Activated CD4-positive, alpha-beta T cell treated with anti-CD3 and anti-CD28 coated beads, Interleukin-2, amount 10 ng/mL, durations not matched to agents 24 days and 14 days (primary cell): ENCODE measurements at regions of chr12 and their contacts with region 1.

Region 1: DNA sequence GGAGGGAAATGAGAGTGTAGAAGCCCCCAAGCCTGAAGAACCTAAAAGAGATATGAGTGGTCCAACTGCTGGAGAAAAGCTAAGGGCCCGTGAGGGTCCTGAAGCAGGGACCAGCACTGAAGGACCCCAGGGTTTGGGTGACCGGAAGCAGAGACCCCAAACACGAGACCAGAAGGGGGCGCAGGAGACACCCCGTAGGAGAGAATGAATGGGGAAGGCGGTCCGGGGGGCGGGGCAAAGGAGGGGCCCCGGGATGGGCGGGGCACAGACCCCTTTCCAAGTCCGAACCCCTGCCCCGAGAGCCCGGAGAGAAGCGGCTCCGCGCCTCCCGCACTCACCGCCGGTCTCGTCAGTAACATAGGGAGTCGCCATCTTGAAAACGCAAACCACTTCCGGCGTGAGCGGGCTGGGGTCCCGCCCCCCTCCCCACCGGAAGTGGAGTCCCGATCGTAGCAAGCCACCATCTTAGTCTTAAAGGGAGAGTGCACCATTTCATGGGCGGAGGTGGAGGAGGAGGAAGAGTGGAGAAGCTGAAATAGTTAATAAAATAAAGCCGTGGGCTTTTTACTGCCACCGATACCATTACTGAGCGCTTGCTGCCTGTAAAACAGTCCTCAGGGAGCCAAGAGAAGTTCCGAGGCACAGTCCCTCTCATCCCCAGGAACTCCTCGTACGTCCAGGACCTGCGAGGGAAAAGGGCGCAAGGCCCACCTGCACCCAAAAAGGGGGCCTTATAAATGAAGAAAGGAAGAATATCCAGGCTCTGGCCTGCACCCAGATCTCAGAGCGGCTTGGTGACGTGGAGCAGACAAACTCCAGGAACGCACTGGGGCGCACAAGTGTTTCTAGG is 731 bp downstream of the PYM1 start:
- DNase-seq: peak; percentile 96
- H3K4me3 Mint-ChIP-seq: peak overlapping the region; percentile 99
- H3K27ac Mint-ChIP-seq: peak overlapping the region; percentile 98
- H3K4me1 Mint-ChIP-seq: peaks cover 40% of the 10 kb centered on the region
- H3K27me3 Mint-ChIP-seq: peaks cover 2% of the 10 kb centered on the region

Region 2: GRCh38 chr12:55728939-55729823 is 197.8 kb before region 1 on chr12 and contains the start of gene CD63:
- intact Hi-C with region 1: loop called (anchors 1 kb)
- DNase-seq: peak; percentile 89
- H3K4me3 Mint-ChIP-seq: peak within 1 kb of the TSS; percentile 92
- H3K27ac Mint-ChIP-seq: peak within 1 kb of the TSS; percentile 95
- H3K4me1 Mint-ChIP-seq: peaks cover 36% of the 10 kb centered on the region
- H3K27me3 Mint-ChIP-seq: no peaks in the 10 kb centered on the region
- total RNA-seq, gene CD63: 190 and 196 TPM in 2 replicates

Region 3: DNA sequence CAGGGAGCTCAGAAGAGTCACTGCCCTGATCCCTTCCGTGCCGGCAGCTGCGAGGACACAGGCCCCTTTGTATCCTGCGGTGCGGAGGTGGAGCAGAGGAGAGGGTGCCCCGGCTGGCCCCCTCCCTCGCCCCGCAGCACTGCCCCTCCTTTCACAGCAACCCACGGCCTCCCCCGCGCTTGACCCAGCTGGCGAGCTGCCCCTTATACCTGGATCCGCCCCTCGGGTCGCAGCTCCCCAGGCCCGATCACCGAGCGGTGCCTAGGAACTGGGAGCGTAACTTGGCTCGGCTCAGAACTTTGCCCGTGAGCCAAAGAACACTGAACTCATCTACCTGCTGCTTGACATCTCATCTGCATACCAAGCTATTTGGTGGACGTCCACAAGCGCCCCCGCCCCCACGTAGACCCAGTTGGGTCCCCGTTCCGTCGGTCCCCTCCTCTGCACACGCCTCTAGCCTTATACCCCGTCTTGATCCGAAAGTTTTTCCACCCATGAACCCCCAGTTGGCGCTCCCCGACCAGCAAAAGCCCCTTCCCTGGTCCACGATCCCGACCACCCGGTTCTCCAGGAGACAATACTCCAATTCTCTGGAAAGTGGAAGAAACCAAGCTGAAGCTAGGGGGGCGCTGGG is 96.9 kb before region 1 on chr12:
- intact Hi-C with region 1: loop called (anchors 1 kb)
- DNase-seq: peak; percentile 81
- H3K4me3 Mint-ChIP-seq: peak overlapping the region; percentile 98
- H3K27ac Mint-ChIP-seq: peak overlapping the region; percentile 93
- H3K4me1 Mint-ChIP-seq: peaks cover 47% of the 10 kb centered on the region
- H3K27me3 Mint-ChIP-seq: no peaks in the 10 kb centered on the region

Region 4: GRCh38 chr12:55966408-55967281 is 39.7 kb after region 1 on chr12 and contains the start of gene CDK2:
- intact Hi-C with region 1: loop called (anchors 1 kb)
- DNase-seq: peak; percentile 98
- H3K4me3 Mint-ChIP-seq: peak within 1 kb of the TSS; percentile 99
- H3K27ac Mint-ChIP-seq: peak within 1 kb of the TSS; percentile 94
- H3K4me1 Mint-ChIP-seq: peaks cover 33% of the 10 kb centered on the region
- H3K27me3 Mint-ChIP-seq: no peaks in the 10 kb centered on the region
- total RNA-seq, gene CDK2: 108 and 110 TPM in 2 replicates

Region 5: GRCh38 chr12:56104109-56104814 is 177.3 kb after region 1 on chr12 and contains the start of gene PA2G4:
- intact Hi-C with region 1: loop called (anchors 1 kb)
- DNase-seq: peak; percentile 100
- H3K4me3 Mint-ChIP-seq: peak within 1 kb of the TSS; percentile 98
- H3K27ac Mint-ChIP-seq: peak within 1 kb of the TSS; percentile 98
- H3K4me1 Mint-ChIP-seq: peaks cover 38% of the 10 kb centered on the region
- H3K27me3 Mint-ChIP-seq: no peaks in the 10 kb centered on the region
- total RNA-seq, gene PA2G4: 453 and 472 TPM in 2 replicates

Region 6: GRCh38 chr12:56321027-56321426 is 394.1 kb after region 1 on chr12:
- intact Hi-C with region 1: no loop called
- DNase-seq: no peak
- H3K4me3 Mint-ChIP-seq: no peak overlapping the region
- H3K27ac Mint-ChIP-seq: no peak overlapping the region
- H3K4me1 Mint-ChIP-seq: no peaks in the 10 kb centered on the region
- H3K27me3 Mint-ChIP-seq: no peaks in the 10 kb centered on the region